IMR-90 (cell line): ENCODE measurements at regions of chr4 and their contacts with region 1.

Region 1: GRCh38 chr4:114694770-114695169 is 96.2 kb downstream of the UGT8 start:
- DNase-seq: peak; percentile 28
- ATAC-seq: no peak
- H3K4me3 ChIP-seq: no peak overlapping the region
- H3K27ac ChIP-seq: no peak overlapping the region
- H3K4me1 ChIP-seq: no peaks in the 10 kb centered on the region
- H3K27me3 ChIP-seq: no peaks in the 10 kb centered on the region
- CTCF ChIP-seq: peak; percentile 56
- POLR2A ChIP-seq: no peak
- RAD21 ChIP-seq: peak; percentile 53

Region 2: DNA sequence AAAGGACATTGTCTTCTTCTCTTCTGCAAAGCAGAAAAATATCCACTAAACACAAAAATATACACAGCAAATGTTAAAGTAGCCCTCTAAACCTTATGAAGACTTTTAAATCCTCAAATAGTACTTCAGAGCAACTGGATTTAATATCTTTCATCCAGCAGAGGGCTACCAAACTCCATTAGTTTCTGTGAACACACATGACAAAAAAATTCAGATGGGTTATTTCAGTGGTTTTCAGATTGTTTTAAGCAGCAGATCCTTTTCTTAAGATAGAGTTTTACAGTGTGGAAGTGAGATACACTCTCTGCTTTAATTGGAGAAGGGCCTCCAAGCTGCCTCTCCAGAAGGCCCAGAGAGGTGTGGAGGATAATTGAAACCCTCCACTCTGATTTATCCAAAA is 1588.7 kb before region 1 on chr4:
- CTCF ChIA-PET with region 1: no interaction called
- POLR2A ChIA-PET with region 1: no interaction called
- dilution Hi-C with region 1: no loop called
- in situ Hi-C with region 1: no loop called
- intact Hi-C with region 1: loop called (anchors 10 kb)
- DNase-seq: peak; percentile 40
- ATAC-seq: peak; percentile 64
- H3K4me3 ChIP-seq: no peak overlapping the region
- H3K27ac ChIP-seq: no peak overlapping the region
- H3K4me1 ChIP-seq: no peaks in the 10 kb centered on the region
- H3K27me3 ChIP-seq: no peaks in the 10 kb centered on the region; the same call in 1 of the 2 replicates
- CTCF ChIP-seq: peak; percentile 46
- POLR2A ChIP-seq: no peak
- RAD21 ChIP-seq: peak; percentile 46

Region 3: DNA sequence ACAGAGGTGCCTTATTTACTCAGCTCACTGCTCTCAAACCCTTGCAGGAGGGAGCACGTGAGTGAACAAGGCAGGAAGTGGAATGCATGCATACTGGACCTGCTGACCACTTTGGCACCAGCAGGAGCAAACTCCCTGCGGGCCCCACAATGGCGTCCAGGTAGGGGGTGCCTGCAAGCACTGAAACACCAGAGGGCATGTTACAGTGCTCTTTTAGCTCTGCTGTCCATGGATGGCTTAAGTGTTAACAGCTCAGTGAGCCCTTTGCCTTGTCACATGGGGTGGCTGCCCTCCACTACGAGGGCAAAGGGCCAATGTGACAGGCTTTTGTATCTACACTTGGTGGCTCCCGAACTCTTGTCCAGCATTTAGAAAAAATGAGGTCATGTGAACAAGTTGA is 295.7 kb before region 1 on chr4:
- CTCF ChIA-PET with region 1: no interaction called
- POLR2A ChIA-PET with region 1: no interaction called
- dilution Hi-C with region 1: no loop called
- in situ Hi-C with region 1: loop called (anchors 10 kb)
- intact Hi-C with region 1: no loop called
- DNase-seq: no peak
- ATAC-seq: no peak
- H3K4me3 ChIP-seq: no peak overlapping the region
- H3K27ac ChIP-seq: no peak overlapping the region
- H3K4me1 ChIP-seq: no peaks in the 10 kb centered on the region
- H3K27me3 ChIP-seq: peaks cover 7% of the 10 kb centered on the region
- CTCF ChIP-seq: no peak
- POLR2A ChIP-seq: no peak
- RAD21 ChIP-seq: no peak

Region 4: DNA sequence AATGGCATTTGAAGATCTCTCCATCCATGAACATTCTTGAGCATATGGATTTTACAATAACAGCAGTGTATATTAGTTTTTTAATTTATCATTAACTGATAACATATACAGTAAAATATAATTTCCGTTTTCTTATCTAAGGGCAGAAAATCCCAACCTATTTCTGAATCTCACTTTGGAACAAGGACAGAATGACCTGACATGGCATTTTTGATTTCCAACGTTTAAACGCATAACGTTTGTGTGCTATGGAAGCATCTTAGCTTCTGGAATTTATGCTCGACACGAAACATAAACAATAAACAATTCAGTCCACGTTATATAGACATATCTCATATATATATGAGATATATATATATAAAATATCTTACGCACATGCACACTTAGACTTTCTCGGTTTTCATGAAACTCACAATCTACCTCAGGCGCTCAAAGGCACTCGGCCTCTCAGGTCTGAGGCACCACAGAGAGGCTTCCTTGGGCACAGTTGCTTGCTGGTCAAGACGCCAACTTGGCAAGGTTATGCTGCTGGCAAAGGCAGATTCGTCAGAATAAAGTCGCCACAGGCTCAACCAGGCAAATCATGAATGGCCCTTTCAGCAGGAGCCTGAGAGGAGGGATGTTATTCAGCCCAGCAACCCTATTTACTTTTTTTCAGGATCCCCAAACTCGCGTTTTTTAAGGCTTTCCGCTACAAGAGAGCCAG is 97.2 kb before region 1 on chr4:
- CTCF ChIA-PET with region 1: no interaction called
- POLR2A ChIA-PET with region 1: no interaction called
- dilution Hi-C with region 1: no loop called
- in situ Hi-C with region 1: no loop called
- intact Hi-C with region 1: no loop called
- DNase-seq: no peak
- ATAC-seq: no peak
- H3K4me3 ChIP-seq: no peak overlapping the region
- H3K27ac ChIP-seq: no peak overlapping the region
- H3K4me1 ChIP-seq: peaks cover 1% of the 10 kb centered on the region; the same call in 1 of the 2 replicates
- H3K27me3 ChIP-seq: peaks cover 24% of the 10 kb centered on the region
- CTCF ChIP-seq: no peak
- POLR2A ChIP-seq: no peak
- RAD21 ChIP-seq: no peak